ENCODE measurements at regions of chr5 and their contacts with region 1.

Region 1: DNA sequence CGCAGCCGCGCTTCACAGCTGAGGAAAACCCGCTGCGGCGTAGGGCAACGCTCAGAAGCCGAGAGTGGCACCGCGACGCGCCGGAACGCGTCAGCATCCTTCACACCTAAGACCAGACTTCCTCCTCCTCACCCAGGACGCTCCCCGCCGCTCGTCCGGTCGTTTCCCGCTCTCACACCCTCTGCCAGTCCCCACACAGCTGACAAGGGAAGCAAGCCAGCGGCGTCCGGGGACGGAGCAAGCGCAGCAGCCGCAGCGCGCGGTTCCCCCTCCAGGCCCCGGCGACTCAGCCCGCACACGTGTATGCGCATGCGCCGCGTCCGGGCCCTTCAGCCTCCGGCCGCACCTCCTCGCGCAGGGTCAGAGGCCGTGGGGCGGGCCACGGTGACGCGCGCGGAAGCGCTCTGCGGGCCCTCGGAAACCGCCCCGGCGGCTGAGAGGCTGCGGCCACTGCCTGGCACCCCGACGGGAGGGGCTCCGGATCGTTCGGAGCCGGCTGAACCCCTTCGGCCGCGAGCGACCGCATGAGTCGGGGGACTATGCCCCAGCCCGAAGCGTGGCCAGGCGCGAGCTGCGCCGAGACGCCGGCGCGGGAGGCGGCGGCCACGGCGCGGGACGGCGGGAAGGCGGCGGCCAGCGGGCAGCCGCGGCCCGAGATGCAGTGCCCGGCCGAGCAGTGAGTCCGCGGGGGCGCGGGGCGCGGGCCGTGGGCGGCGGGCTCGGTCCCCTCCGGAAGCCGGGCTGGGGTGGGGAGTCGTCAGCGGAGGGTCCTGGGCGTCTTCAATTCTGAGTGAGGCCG is at the start of gene OTULIN:
- DNase-seq: peak; percentile 94
- H3K4me3 Mint-ChIP-seq: peak within 1 kb of the TSS; percentile 92
- H3K27ac Mint-ChIP-seq: peak within 1 kb of the TSS; percentile 95
- H3K4me1 Mint-ChIP-seq: peaks cover 54% of the 10 kb centered on the region
- H3K27me3 Mint-ChIP-seq: no peaks in the 10 kb centered on the region
- total RNA-seq, gene OTULIN: 53.3 to 53.6 TPM

Region 2: DNA sequence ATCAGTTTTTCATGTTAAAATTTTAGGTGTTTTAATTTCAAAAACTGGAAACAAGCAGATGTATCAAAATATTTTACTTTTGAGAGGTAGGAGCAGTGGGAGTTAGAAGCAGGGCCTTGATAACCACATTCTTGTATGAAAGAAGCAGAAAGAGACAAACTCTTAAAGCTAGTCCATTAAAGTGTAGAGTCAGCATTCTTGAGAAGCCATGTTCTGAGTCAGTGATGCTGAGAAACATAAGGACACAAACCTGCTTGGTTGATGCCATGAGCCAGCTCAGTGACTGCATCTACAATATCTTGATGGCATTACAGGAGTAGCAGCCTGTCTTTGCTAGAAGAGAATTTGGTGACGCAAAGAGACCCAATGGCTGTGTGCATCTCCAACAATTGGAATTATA is 1934.1 kb before region 1 on chr5:
- CTCF ChIA-PET with region 1: no interaction called
- POLR2A ChIA-PET with region 1: no interaction called
- intact Hi-C with region 1: no loop called
- DNase-seq: no peak
- H3K4me3 Mint-ChIP-seq: no peak overlapping the region
- H3K27ac Mint-ChIP-seq: no peak overlapping the region
- H3K4me1 Mint-ChIP-seq: no peaks in the 10 kb centered on the region
- H3K27me3 Mint-ChIP-seq: no peaks in the 10 kb centered on the region

Region 3: GRCh38 chr5:14142827-14143548 is 521.5 kb before region 1 on chr5 and contains the start of gene TRIO:
- CTCF ChIA-PET with region 1: no interaction called
- POLR2A ChIA-PET with region 1: no interaction called
- intact Hi-C with region 1: loop called (anchors 5 kb)
- DNase-seq: peak; percentile 80
- H3K4me3 Mint-ChIP-seq: peak within 1 kb of the TSS; percentile 75
- H3K27ac Mint-ChIP-seq: peak within 1 kb of the TSS; percentile 5
- H3K4me1 Mint-ChIP-seq: peaks cover 12% of the 10 kb centered on the region
- H3K27me3 Mint-ChIP-seq: peaks cover 44% of the 10 kb centered on the region
- total RNA-seq, gene TRIO: 6.0 to 6.6 TPM

Region 4: DNA sequence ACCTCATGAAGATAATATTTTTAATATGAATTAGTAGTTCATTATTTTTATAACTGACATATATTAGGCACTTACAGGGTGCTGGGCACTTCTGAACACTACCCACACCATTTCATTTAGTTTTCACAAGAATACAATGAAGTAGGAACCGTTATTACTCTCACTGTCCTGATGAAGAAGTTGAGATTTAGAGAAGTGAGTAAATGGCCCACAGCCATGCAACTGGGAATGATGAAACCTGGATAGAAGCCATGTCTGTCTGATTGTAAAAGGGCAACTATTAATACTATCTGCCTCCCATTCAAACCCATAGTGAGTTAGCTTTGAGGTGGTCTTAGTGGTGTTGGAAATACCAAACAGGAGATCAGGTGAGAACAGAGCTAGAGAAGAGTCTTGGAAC is 112.5 kb before region 1 on chr5:
- CTCF ChIA-PET with region 1: no interaction called
- POLR2A ChIA-PET with region 1: no interaction called
- intact Hi-C with region 1: no loop called
- DNase-seq: no peak
- H3K4me3 Mint-ChIP-seq: no peak overlapping the region
- H3K27ac Mint-ChIP-seq: no peak overlapping the region
- H3K4me1 Mint-ChIP-seq: peaks cover 4% of the 10 kb centered on the region
- H3K27me3 Mint-ChIP-seq: peaks cover 4% of the 10 kb centered on the region

Region 5: DNA sequence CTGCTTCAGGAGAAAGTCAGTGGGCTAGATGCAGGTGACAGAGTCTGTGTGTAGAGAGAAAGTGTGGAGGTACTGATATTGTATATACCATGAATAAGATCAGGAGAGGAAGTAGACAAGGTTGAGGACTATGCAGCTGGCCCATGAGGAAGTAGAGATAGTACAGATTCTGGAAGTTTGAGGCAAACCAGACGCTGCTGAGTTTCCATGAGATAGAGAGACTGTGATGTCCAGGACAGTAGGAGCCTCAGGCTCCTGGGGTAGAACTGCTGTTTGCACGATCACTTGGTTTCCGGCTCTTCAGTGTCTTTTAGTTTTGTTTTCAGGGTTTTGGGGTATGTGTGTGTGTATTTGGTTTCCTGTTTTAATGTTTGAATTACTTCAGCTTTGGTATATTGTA is 69.3 kb before region 1 on chr5:
- CTCF ChIA-PET with region 1: no interaction called
- POLR2A ChIA-PET with region 1: no interaction called
- intact Hi-C with region 1: loop called (anchors 2 kb)
- DNase-seq: peak; percentile 50
- H3K4me3 Mint-ChIP-seq: peak overlapping the region; percentile 63
- H3K27ac Mint-ChIP-seq: peak overlapping the region; percentile 70
- H3K4me1 Mint-ChIP-seq: peaks cover 84% of the 10 kb centered on the region
- H3K27me3 Mint-ChIP-seq: no peaks in the 10 kb centered on the region

Region 6: DNA sequence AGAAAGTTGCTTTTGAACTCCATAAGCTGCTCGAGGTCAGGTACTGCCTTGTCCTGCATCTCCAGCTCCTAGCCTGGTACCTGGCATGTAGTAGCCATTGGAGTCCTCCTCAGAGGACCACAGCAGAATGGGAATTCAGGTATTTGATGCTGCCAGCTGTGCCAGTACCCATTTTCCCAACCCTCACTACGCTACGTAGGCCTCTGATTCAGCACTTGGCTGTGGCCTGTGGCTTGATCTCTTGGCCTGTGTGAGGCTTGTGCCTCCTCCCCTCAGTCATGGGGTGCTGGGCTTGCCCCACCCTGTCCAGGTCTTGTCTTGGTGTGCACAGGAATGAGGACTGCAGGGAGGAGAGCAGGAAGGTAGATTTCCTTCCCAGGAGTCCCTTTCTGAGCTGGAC is 11.8 kb after region 1 on chr5:
- CTCF ChIA-PET with region 1: interaction called, 8 read pairs
- POLR2A ChIA-PET with region 1: interaction called, 12 read pairs
- intact Hi-C with region 1: loop called (anchors 1 kb)
- DNase-seq: peak; percentile 59
- H3K4me3 Mint-ChIP-seq: peak overlapping the region; percentile 30
- H3K27ac Mint-ChIP-seq: peak overlapping the region; percentile 89
- H3K4me1 Mint-ChIP-seq: peaks cover 75% of the 10 kb centered on the region
- H3K27me3 Mint-ChIP-seq: no peaks in the 10 kb centered on the region

Region 7: GRCh38 chr5:14809369-14810155 is 145.1 kb after region 1 on chr5:
- CTCF ChIA-PET with region 1: no interaction called
- POLR2A ChIA-PET with region 1: no interaction called
- intact Hi-C with region 1: loop called (anchors 2 kb)
- DNase-seq: peak; percentile 90
- H3K4me3 Mint-ChIP-seq: peak overlapping the region; percentile 74
- H3K27ac Mint-ChIP-seq: peak overlapping the region; percentile 80
- H3K4me1 Mint-ChIP-seq: peaks cover 57% of the 10 kb centered on the region
- H3K27me3 Mint-ChIP-seq: no peaks in the 10 kb centered on the region